ENCODE measurements at regions of chr4 and their contacts with region 1.

Region 1: GRCh38 chr4:56445699-56446098 is 9.6 kb downstream of the PAICS start:
- DNase-seq: no peak
- ATAC-seq: peak; percentile 51
- H3K4me3 ChIP-seq: no peak overlapping the region
- H3K27ac ChIP-seq: no peak overlapping the region
- H3K4me1 ChIP-seq: no peaks in the 10 kb centered on the region; the same call in 1 of the 2 replicates
- H3K27me3 ChIP-seq: no peaks in the 10 kb centered on the region
- CTCF ChIP-seq: no peak
- EP300 ChIP-seq: no peak
- POLR2A ChIP-seq: no peak
- RAD21 ChIP-seq: no peak

Region 2: GRCh38 chr4:55906999-55907398 is 538.7 kb before region 1 on chr4:
- CTCF ChIA-PET with region 1: no interaction called
- POLR2A ChIA-PET with region 1: no interaction called
- RAD21 ChIA-PET with region 1: no interaction called
- SMC1A ChIA-PET with region 1: no interaction called
- in situ Hi-C with region 1: no loop called
- intact Hi-C with region 1: no loop called
- DNase-seq: no peak
- ATAC-seq: no peak
- H3K4me3 ChIP-seq: no peak overlapping the region
- H3K27ac ChIP-seq: no peak overlapping the region
- H3K4me1 ChIP-seq: no peaks in the 10 kb centered on the region
- H3K27me3 ChIP-seq: no peaks in the 10 kb centered on the region
- CTCF ChIP-seq: no peak
- EP300 ChIP-seq: no peak
- POLR2A ChIP-seq: no peak
- RAD21 ChIP-seq: no peak

Region 3: GRCh38 chr4:56197387-56197786 is 248.3 kb before region 1 on chr4:
- CTCF ChIA-PET with region 1: no interaction called
- POLR2A ChIA-PET with region 1: no interaction called
- RAD21 ChIA-PET with region 1: no interaction called
- SMC1A ChIA-PET with region 1: no interaction called
- in situ Hi-C with region 1: no loop called
- intact Hi-C with region 1: no loop called
- DNase-seq: no peak
- ATAC-seq: no peak
- H3K4me3 ChIP-seq: no peak overlapping the region
- H3K27ac ChIP-seq: no peak overlapping the region
- H3K4me1 ChIP-seq: no peaks in the 10 kb centered on the region
- H3K27me3 ChIP-seq: no peaks in the 10 kb centered on the region; a peak in 1 of 4 replicates
- CTCF ChIP-seq: no peak
- EP300 ChIP-seq: no peak
- POLR2A ChIP-seq: no peak
- RAD21 ChIP-seq: no peak

Region 4: GRCh38 chr4:56460085-56460484 is 14.4 kb after region 1 on chr4:
- CTCF ChIA-PET with region 1: interaction called, 7 read pairs
- POLR2A ChIA-PET with region 1: interaction called, 3 read pairs
- RAD21 ChIA-PET with region 1: no interaction called
- SMC1A ChIA-PET with region 1: interaction called, 29 read pairs
- in situ Hi-C with region 1: no loop called
- intact Hi-C with region 1: no loop called
- DNase-seq: no peak
- ATAC-seq: no peak
- H3K4me3 ChIP-seq: no peak overlapping the region
- H3K27ac ChIP-seq: no peak overlapping the region
- H3K4me1 ChIP-seq: no peaks in the 10 kb centered on the region
- H3K27me3 ChIP-seq: no peaks in the 10 kb centered on the region
- CTCF ChIP-seq: no peak
- EP300 ChIP-seq: no peak
- POLR2A ChIP-seq: no peak
- RAD21 ChIP-seq: no peak

Region 5: GRCh38 chr4:56467284-56468096 is 21.8 kb after region 1 on chr4 and contains the start of gene SRP72:
- CTCF ChIA-PET with region 1: interaction called, 3 read pairs
- POLR2A ChIA-PET with region 1: interaction called, 3 read pairs
- RAD21 ChIA-PET with region 1: interaction called, 3 read pairs
- SMC1A ChIA-PET with region 1: interaction called, 19 read pairs
- in situ Hi-C with region 1: no loop called
- intact Hi-C with region 1: no loop called
- DNase-seq: peak; percentile 36
- ATAC-seq: peak; percentile 95
- H3K4me3 ChIP-seq: peak within 1 kb of the TSS; percentile 89
- H3K27ac ChIP-seq: peak within 1 kb of the TSS; percentile 52
- H3K4me1 ChIP-seq: peaks cover 7% of the 10 kb centered on the region; the same call in 1 of the 2 replicates
- H3K27me3 ChIP-seq: no peaks in the 10 kb centered on the region
- CTCF ChIP-seq: no peak
- EP300 ChIP-seq: no peak
- POLR2A ChIP-seq: peak; percentile 96
- RAD21 ChIP-seq: no peak
- polyA plus RNA-seq, gene SRP72: 158 to 186 TPM

Region 6: GRCh38 chr4:56544573-56545131 is 99.0 kb after region 1 on chr4:
- CTCF ChIA-PET with region 1: no interaction called
- POLR2A ChIA-PET with region 1: no interaction called
- RAD21 ChIA-PET with region 1: no interaction called
- SMC1A ChIA-PET with region 1: no interaction called
- in situ Hi-C with region 1: no loop called
- intact Hi-C with region 1: no loop called
- DNase-seq: peak; percentile 17
- ATAC-seq: peak; percentile 100
- H3K4me3 ChIP-seq: no peak overlapping the region
- H3K27ac ChIP-seq: no peak overlapping the region
- H3K4me1 ChIP-seq: no peaks in the 10 kb centered on the region
- H3K27me3 ChIP-seq: no peaks in the 10 kb centered on the region
- CTCF ChIP-seq: peak; percentile 94 to 99 (median 97); a peak in 5 of 6 replicates
- EP300 ChIP-seq: no peak
- POLR2A ChIP-seq: no peak
- RAD21 ChIP-seq: peak; percentile 78

Measured in GM12878 (cell line).